Mammary epithelial cell (primary cell): ENCODE measurements at regions of chr6 and their contacts with region 1.

Region 1: GRCh38 chr6:24774696-24775519 is at the start of gene GMNN:
- DNase-seq: peak; percentile 93
- H3K4me3 ChIP-seq: peak within 1 kb of the TSS; percentile 74 to 100 (median 100)
- H3K27ac ChIP-seq: peak within 1 kb of the TSS; percentile 93
- H3K4me1 ChIP-seq: peaks cover 5% of the 10 kb centered on the region
- H3K27me3 ChIP-seq: no peaks in the 10 kb centered on the region
- CTCF ChIP-seq: no peak
- total RNA-seq, gene GMNN: 8.0 to 36.3 TPM

Region 2: GRCh38 chr6:24743265-24743943 is 31.5 kb before region 1 on chr6:
- CTCF ChIA-PET with region 1: no interaction called
- dilution Hi-C with region 1: loop called (anchors 5 kb)
- in situ Hi-C with region 1: no loop called
- intact Hi-C with region 1: loop called (anchors 2 kb)
- DNase-seq: peak; percentile 94
- H3K4me3 ChIP-seq: peak overlapping the region in 2 of 3 experiments; percentile 10 to 17
- H3K27ac ChIP-seq: peak overlapping the region; percentile 97
- H3K4me1 ChIP-seq: peaks cover 25% of the 10 kb centered on the region
- H3K27me3 ChIP-seq: no peaks in the 10 kb centered on the region
- CTCF ChIP-seq: no peak

Region 3: DNA sequence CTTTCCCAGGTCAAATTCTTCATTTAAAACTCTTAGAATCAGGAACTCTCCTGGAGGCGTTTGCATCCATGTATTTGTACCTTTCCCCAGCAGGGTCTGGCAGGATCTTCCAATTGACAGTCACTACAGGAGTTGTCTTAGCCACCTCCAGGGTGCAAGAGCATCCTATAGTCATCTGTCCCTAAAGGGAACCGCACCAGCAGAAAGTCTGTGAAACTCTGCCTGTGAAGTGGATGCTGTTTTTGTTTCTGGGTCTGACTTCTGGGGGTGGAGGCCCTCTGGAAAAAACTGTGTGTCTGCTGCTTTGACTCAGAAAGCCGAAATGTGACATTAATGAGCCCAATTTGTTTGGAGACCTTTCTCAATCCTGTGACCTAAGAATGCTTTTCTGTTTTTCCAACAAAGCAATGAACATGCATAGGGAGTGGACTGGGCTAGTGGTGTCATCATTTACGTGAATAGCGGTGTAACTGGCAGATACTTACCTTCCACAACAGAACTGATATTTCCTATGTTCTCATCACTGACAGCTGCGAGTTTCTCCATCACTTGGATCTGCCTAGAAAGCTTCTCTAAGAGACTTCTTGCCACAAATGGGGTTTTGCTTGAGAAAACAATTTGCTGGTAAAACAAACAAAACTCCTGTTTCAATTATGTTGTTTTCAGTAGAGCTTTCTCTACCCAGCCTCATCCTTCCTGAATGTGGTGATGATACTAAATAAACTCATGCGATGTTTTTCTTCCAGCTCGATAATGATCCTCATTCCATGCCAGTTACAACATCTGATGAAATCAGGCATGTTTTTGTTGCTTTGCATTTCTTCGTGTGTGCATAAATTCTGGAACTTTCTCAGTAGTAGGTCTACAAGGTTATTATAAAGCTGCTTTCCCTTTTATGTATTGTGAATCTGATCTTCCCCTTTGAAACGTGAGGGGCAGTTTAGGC is 57.1 kb after region 1 on chr6:
- CTCF ChIA-PET with region 1: no interaction called
- dilution Hi-C with region 1: no loop called
- in situ Hi-C with region 1: no loop called
- intact Hi-C with region 1: loop called (anchors 1 kb)
- DNase-seq: no peak
- H3K4me3 ChIP-seq: no peak overlapping the region
- H3K27ac ChIP-seq: no peak overlapping the region
- H3K4me1 ChIP-seq: peaks cover 14% of the 10 kb centered on the region
- H3K27me3 ChIP-seq: no peaks in the 10 kb centered on the region
- CTCF ChIP-seq: no peak

Region 4: DNA sequence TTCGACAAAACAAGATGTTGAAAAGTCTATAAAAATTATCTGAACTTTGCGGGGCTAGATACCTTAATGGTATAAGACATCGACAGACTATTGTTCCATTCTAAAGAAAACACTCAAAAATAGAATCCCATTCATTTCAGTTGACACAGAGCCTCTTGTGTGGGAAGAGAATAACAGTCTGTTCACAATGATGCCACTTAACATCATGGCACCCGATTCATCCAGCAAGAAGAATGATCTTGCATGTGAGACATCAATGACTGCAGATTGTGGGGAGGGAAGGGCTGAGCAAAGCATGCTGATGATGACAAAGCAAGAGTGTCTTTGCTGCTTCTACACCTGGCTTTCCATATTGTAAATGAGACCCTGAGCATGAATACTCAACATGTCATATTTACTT is 73.6 kb after region 1 on chr6:
- CTCF ChIA-PET with region 1: no interaction called
- dilution Hi-C with region 1: loop called (anchors 10 kb)
- in situ Hi-C with region 1: no loop called
- intact Hi-C with region 1: no loop called
- DNase-seq: no peak
- H3K4me3 ChIP-seq: no peak overlapping the region
- H3K27ac ChIP-seq: no peak overlapping the region
- H3K4me1 ChIP-seq: peaks cover 8% of the 10 kb centered on the region
- H3K27me3 ChIP-seq: no peaks in the 10 kb centered on the region
- CTCF ChIP-seq: no peak

Region 5: DNA sequence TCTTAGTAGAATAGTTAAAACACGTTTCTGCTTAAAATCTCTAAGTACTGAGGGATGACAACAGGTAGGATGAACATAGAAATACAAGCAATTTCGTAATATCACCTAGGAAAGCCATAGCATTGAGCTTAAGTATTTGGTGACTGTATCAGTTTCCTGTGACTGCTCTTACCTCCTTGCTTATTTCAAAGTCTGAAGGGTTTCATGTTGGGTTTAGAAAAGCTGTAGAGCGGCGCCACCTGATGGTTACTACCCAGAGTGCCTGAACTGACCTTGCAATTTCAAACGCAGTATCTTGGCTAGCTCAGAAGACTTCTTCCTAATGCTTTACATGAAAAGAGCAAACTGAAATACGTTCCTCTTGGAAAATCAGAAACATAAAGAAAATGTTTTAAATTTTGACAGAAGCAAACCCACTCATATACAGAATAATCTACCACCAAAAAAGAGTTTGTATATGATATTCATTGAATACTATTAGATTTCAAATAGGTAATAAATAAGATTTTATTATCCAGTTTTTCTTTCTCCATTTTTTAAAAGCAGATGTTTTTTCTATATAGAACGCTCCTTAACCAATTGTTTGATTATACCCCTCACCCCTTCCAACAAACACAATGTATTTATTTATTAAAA is 243.1 kb after region 1 on chr6:
- CTCF ChIA-PET with region 1: interaction called, 9 read pairs
- dilution Hi-C with region 1: no loop called
- in situ Hi-C with region 1: no loop called
- intact Hi-C with region 1: loop called (anchors 1 kb)
- DNase-seq: peak; percentile 78
- H3K4me3 ChIP-seq: peak overlapping the region in 1 of 3 experiments; percentile 2
- H3K27ac ChIP-seq: peak overlapping the region; percentile 72
- H3K4me1 ChIP-seq: peaks cover 44% of the 10 kb centered on the region
- H3K27me3 ChIP-seq: no peaks in the 10 kb centered on the region
- CTCF ChIP-seq: peak; percentile 90

Region 6: GRCh38 chr6:25564943-25565342 is 790.0 kb after region 1 on chr6:
- CTCF ChIA-PET with region 1: no interaction called
- dilution Hi-C with region 1: no loop called
- in situ Hi-C with region 1: no loop called
- intact Hi-C with region 1: no loop called
- DNase-seq: no peak
- H3K4me3 ChIP-seq: no peak overlapping the region
- H3K27ac ChIP-seq: no peak overlapping the region
- H3K4me1 ChIP-seq: no peaks in the 10 kb centered on the region
- H3K27me3 ChIP-seq: no peaks in the 10 kb centered on the region
- CTCF ChIP-seq: no peak